T-cell (primary cell): ENCODE measurements at regions of chr7 and their contacts with region 1.

Region 1: GRCh38 chr7:13851736-13852135 is 137.7 kb downstream of the ETV1 start:
- DNase-seq: no peak
- ATAC-seq: no peak
- H3K4me3 ChIP-seq: no peak overlapping the region
- H3K4me3 Mint-ChIP-seq: no peak overlapping the region
- H3K27ac ChIP-seq: no peak overlapping the region
- H3K27ac Mint-ChIP-seq: peak overlapping the region in 1 of 2 donors; percentile 18
- H3K4me1 ChIP-seq: peaks cover 0 to 9% of the 10 kb centered on the region in 2 experiments
- H3K4me1 Mint-ChIP-seq: peaks cover 8 to 28% (median 18%) of the 10 kb centered on the region in 3 donors
- H3K27me3 ChIP-seq: no peaks in the 10 kb centered on the region
- H3K27me3 Mint-ChIP-seq: no peaks in the 10 kb centered on the region

Region 2: GRCh38 chr7:12211054-12211710 is 1640.6 kb before region 1 on chr7 and contains the start of gene TMEM106B:
- CTCF ChIA-PET with region 1: no interaction called
- POLR2A ChIA-PET with region 1: interaction called in 1 of 2 experiments, 11 read pairs
- DNase-seq: peak; percentile 89 to 99 (median 96)
- ATAC-seq: peak; percentile 89 to 93 (median 90)
- H3K4me3 ChIP-seq: peak within 1 kb of the TSS; percentile 66 to 91
- H3K4me3 Mint-ChIP-seq: peak within 1 kb of the TSS; percentile 89 to 95 (median 94)
- H3K27ac ChIP-seq: peak within 1 kb of the TSS; percentile 99
- H3K27ac Mint-ChIP-seq: peak within 1 kb of the TSS; percentile 97
- H3K4me1 ChIP-seq: peaks cover 14 to 18% of the 10 kb centered on the region in 2 experiments
- H3K4me1 Mint-ChIP-seq: peaks cover 44 to 48% (median 44%) of the 10 kb centered on the region in 3 donors
- H3K27me3 ChIP-seq: no peaks in the 10 kb centered on the region
- H3K27me3 Mint-ChIP-seq: peaks cover 0 to 7% of the 10 kb centered on the region in 2 donors
- total RNA-seq, gene TMEM106B: 30.8 to 45.9 (median 38.7) TPM

Region 3: DNA sequence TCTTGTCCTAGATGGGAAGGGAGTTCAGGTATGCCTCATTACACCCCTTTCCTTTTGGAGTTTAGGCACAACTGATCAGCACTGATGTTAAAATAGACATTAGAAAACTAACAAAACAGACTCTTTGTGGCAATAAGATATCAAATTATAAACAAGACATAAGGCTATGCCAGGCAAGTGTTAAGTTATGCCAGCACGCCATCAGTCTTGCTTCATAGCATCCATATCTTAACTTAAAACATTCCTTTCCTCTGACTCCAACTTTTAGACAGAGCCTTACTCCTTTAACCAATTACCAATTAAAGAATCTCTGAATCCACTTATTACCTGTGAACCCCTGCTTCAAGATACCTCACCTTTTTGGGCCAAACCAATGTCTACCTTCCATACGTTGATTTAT is 264.0 kb after region 1 on chr7:
- CTCF ChIA-PET with region 1: no interaction called
- POLR2A ChIA-PET with region 1: no interaction called
- DNase-seq: no peak
- ATAC-seq: no peak
- H3K4me3 ChIP-seq: no peak overlapping the region
- H3K4me3 Mint-ChIP-seq: no peak overlapping the region
- H3K27ac ChIP-seq: no peak overlapping the region
- H3K27ac Mint-ChIP-seq: no peak overlapping the region
- H3K4me1 ChIP-seq: no peaks in the 10 kb centered on the region
- H3K4me1 Mint-ChIP-seq: no peaks in the 10 kb centered on the region
- H3K27me3 ChIP-seq: no peaks in the 10 kb centered on the region
- H3K27me3 Mint-ChIP-seq: no peaks in the 10 kb centered on the region